CD8-positive, alpha-beta T cell (primary cell): ENCODE measurements at regions of chr6 and their contacts with region 1.

Region 1: DNA sequence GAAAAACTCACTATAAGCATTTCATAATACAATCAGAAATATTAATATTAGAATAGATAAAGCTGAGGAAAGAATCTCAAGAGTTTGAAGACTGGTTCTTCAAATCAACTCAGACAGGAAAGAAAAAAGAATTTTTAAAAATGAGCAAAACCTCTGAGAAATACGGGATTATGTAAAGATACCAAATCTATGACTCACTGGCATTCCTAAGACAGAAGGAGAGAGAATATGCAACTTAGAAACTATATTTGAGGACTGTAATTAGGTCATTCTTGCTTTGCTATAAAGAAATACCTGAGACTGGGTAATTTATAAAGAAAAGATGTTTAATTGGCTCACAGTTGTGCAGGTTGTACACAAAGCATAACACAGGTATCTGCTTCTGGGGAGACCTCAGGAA is 665.1 kb downstream of the RNF144B start:
- DNase-seq: no peak
- ATAC-seq: no peak
- H3K4me3 ChIP-seq: no peak overlapping the region
- H3K4me3 Mint-ChIP-seq: no peak overlapping the region
- H3K27ac ChIP-seq: no peak overlapping the region
- H3K27ac Mint-ChIP-seq: no peak overlapping the region
- H3K4me1 ChIP-seq: no peaks in the 10 kb centered on the region
- H3K4me1 Mint-ChIP-seq: no peaks in the 10 kb centered on the region
- H3K27me3 ChIP-seq: no peaks in the 10 kb centered on the region
- H3K27me3 Mint-ChIP-seq: no peaks in the 10 kb centered on the region
- CTCF ChIP-seq: no peak

Region 2: GRCh38 chr6:19035461-19036195 is 16.6 kb before region 1 on chr6:
- CTCF ChIA-PET with region 1: no interaction called
- POLR2A ChIA-PET with region 1: no interaction called
- intact Hi-C with region 1: loop called (anchors 1 kb)
- DNase-seq: no peak
- ATAC-seq: no peak
- H3K4me3 ChIP-seq: no peak overlapping the region
- H3K4me3 Mint-ChIP-seq: no peak overlapping the region
- H3K27ac ChIP-seq: no peak overlapping the region
- H3K27ac Mint-ChIP-seq: no peak overlapping the region
- H3K4me1 ChIP-seq: no peaks in the 10 kb centered on the region
- H3K4me1 Mint-ChIP-seq: no peaks in the 10 kb centered on the region
- H3K27me3 ChIP-seq: no peaks in the 10 kb centered on the region
- H3K27me3 Mint-ChIP-seq: no peaks in the 10 kb centered on the region
- CTCF ChIP-seq: no peak

Region 3: DNA sequence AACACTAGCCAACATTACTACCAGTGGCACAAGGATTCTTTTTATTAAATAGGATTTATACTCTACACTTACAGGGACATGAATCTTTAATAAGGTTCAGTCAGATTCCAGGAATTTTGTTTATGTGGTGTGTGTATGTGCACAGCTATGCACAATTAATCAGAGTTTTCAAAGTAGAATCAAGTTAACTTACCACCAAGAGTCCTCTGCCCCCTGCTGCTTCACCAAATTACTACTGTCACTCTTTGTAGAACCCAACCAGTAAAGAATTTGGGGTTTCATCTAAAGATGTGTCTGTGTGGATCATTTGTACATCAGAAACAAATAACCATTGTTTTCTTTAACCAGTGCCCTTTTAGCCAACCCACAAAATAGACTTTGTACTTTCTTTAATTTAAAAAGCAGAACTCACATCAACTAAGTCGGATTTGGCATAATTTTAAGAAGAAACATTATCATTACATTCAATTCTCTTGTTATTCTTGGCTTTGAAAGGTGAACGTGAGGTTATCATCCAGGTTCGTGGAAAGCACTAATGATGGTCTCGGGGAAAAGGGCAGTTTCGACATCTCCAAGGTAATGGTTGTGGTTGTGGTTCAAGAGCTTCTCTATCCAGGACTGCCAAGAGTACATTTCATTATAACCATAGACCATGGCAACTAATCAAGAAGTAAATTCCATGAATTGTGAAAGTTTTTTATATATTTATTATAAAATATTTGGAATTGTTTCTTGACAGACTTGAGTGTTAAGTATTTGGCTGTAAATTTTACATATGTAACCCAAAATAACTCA is 270.7 kb after region 1 on chr6:
- CTCF ChIA-PET with region 1: no interaction called
- POLR2A ChIA-PET with region 1: no interaction called
- intact Hi-C with region 1: no loop called
- DNase-seq: no peak
- ATAC-seq: no peak
- H3K4me3 ChIP-seq: no peak overlapping the region
- H3K4me3 Mint-ChIP-seq: no peak overlapping the region
- H3K27ac ChIP-seq: no peak overlapping the region
- H3K27ac Mint-ChIP-seq: no peak overlapping the region
- H3K4me1 ChIP-seq: no peaks in the 10 kb centered on the region
- H3K4me1 Mint-ChIP-seq: no peaks in the 10 kb centered on the region
- H3K27me3 ChIP-seq: no peaks in the 10 kb centered on the region
- H3K27me3 Mint-ChIP-seq: no peaks in the 10 kb centered on the region
- CTCF ChIP-seq: no peak